ENCODE measurements at regions of chr17 and their contacts with region 1.

Region 1: GRCh38 chr17:38656959-38657823 is 17.6 kb downstream of the EPOP start:
- DNase-seq: no peak
- H3K4me3 ChIP-seq: no peak overlapping the region
- H3K27ac ChIP-seq: no peak overlapping the region
- H3K4me1 ChIP-seq: peaks cover 0 to 3% (median 0%) of the 10 kb centered on the region in 4 donors
- H3K27me3 ChIP-seq: peaks cover 36% of the 10 kb centered on the region
- CTCF ChIP-seq: no peak
- EP300 ChIP-seq: no peak
- POLR2A ChIP-seq: no peak

Region 2: DNA sequence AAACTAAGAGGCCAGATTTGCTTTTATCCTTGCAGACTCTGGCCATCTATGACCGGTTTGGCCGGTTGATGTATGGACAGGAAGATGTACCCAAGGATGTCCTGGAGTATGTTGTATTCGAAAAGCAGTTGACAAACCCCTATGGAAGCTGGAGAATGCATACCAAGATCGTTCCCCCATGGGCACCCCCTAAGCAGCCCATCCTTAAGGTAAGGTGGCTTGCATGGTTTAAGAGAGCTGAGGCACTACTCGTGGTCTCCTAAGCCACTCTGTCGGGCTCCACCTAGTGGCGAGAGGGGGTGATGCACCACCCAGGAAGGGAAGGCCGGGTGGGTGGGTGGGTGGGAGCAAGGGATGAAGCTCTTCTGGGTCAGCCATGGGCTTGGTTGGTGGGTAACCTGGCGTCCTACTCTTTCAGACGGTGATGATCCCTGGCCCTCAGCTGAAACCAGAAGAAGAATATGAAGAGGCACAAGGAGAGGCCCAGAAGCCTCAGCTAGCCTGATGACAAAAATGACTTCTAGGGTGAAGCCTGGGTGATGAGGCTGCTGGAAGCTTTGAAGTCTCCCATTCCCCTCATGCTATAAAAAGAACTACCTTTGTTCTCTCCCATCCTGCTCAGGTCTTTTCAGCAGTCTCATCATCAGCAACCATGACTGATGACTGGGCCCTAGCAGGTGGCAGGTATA is 335.0 kb before region 1 on chr17:
- in situ Hi-C with region 1: no loop called
- intact Hi-C with region 1: no loop called
- DNase-seq: peak; percentile 65
- H3K4me3 ChIP-seq: no peak overlapping the region
- H3K27ac ChIP-seq: no peak overlapping the region
- H3K4me1 ChIP-seq: no peaks in the 10 kb centered on the region
- H3K27me3 ChIP-seq: no peaks in the 10 kb centered on the region
- CTCF ChIP-seq: peak; percentile 9 to 90 (median 86)
- EP300 ChIP-seq: no peak
- POLR2A ChIP-seq: no peak

Region 3: DNA sequence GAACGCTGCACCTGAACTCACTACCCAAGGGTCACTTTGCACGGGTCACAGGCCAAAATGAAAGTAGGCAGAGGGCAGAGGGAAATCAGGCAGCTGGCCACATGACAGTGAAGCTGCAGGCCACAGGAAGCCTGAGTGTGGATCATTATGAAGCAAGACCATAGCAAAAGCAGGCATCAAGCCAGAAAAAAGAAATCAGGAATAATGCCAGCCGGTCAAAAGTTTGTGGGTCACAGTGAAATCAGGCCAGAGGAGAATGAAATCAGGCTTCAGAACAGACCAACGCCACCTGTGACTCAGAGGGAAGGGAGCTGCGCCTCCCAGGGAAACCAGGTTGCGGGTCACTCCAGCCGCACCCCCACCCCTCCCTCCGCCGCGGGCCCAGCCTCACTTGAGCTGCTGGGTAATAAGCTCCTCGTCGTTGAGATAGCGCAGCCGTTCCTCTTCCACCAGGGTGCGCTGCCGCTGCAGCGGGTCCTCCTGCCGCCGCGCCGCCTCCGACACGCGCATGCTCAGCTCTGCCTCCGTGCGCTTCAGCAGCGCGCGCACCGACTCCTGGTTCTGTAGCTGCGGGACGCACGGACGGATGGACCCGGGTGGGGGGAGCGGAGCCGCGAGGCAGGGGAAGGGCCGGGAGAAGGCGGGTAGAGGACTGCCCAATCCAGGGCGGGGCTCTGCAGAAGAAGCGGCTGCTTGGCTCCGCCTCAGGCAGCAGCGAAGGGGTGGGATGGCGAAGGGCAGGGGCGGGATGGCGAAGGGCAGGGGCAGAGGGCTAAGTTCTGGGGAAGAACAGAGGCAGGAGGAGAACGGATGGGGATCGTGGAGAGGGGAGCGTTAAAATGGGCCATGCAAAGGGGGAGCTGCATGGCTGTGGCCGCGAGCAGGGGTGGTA is 99.1 kb before region 1 on chr17:
- in situ Hi-C with region 1: loop called in 3 of 4 experiments (anchors 10 to 25 kb)
- intact Hi-C with region 1: no loop called
- DNase-seq: peak; percentile 95
- H3K4me3 ChIP-seq: peak overlapping the region in 3 of 4 donors; percentile 18 to 46 (median 28)
- H3K27ac ChIP-seq: peak overlapping the region in 3 of 4 donors; percentile 3 to 45 (median 31)
- H3K4me1 ChIP-seq: peaks cover 9 to 30% (median 26%) of the 10 kb centered on the region in 4 donors
- H3K27me3 ChIP-seq: peaks cover 40% of the 10 kb centered on the region
- CTCF ChIP-seq: peak; percentile 86 to 94 (median 88)
- EP300 ChIP-seq: no peak
- POLR2A ChIP-seq: no peak